A673 (cell line): ENCODE measurements at regions of chr16 and their contacts with region 1.

Region 1: DNA sequence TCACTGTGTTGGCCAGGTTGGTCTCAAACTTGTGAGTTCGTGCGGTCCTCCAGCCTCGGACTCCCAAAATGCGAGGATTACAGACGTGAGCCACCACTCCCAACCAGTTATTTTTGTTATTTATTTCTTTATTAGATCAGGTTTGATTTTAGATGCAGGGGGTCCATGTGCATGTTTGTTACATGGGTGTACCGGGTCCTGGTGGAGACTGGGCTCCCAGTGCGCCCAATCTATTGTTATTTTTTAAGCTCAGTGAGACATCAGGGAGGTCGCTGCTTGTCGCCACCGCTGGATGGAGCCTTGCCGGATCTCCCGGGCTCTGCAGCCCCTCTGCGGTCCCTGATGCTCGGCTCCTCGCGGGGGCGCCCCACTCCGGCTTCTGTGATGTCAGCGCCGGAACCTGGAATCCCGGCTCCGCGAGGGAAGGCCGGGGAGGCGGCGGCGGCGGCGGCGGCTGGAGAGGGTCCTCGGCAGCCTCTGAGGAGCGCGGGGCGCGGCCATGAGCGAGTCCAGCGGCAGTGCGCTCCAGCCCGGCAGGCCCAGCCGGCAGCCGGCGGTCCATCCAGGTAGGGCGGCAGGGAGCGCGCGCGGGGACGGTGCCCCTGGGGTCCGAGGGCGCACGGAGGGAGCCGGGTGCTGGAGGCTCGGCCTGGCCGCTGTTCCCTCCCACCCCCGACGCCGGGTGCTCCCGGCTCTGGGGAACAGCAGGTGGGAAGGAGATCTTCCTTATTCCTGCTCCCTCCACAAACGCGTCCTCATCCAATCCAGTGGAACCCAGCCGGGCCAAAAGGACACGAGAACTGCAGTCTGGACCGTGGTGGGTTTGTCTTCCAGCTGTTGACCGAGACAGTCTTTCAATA is at the start of gene TMC7:
- DNase-seq: peak; percentile 93
- H3K4me3 ChIP-seq: peak within 1 kb of the TSS; percentile 59
- H3K27ac ChIP-seq: no peak within 1 kb of the TSS
- H3K4me1 ChIP-seq: no peaks in the 10 kb centered on the region
- H3K27me3 ChIP-seq: no peaks in the 10 kb centered on the region
- CTCF ChIP-seq: peak; percentile 96
- total RNA-seq, gene TMC7: 0.59 and 0.82 TPM in 2 replicates

Region 2: GRCh38 chr16:18809165-18809564 is 174.6 kb before region 1 on chr16:
- CTCF ChIA-PET with region 1: no interaction called
- POLR2A ChIA-PET with region 1: no interaction called
- intact Hi-C with region 1: no loop called
- DNase-seq: no peak
- H3K4me3 ChIP-seq: no peak overlapping the region
- H3K27ac ChIP-seq: no peak overlapping the region
- H3K4me1 ChIP-seq: peaks cover 14% of the 10 kb centered on the region
- H3K27me3 ChIP-seq: no peaks in the 10 kb centered on the region
- CTCF ChIP-seq: no peak

Region 3: GRCh38 chr16:19071811-19072777 is 88.3 kb after region 1 on chr16:
- CTCF ChIA-PET with region 1: no interaction called
- POLR2A ChIA-PET with region 1: no interaction called
- intact Hi-C with region 1: loop called (anchors 1 kb)
- DNase-seq: peak; percentile 72
- H3K4me3 ChIP-seq: no peak overlapping the region
- H3K27ac ChIP-seq: no peak overlapping the region
- H3K4me1 ChIP-seq: peaks cover 9% of the 10 kb centered on the region
- H3K27me3 ChIP-seq: no peaks in the 10 kb centered on the region
- CTCF ChIP-seq: peak; percentile 75

Region 4: GRCh38 chr16:19375561-19376158 is 391.9 kb after region 1 on chr16:
- CTCF ChIA-PET with region 1: no interaction called
- POLR2A ChIA-PET with region 1: no interaction called
- intact Hi-C with region 1: loop called (anchors 2 kb)
- DNase-seq: peak; percentile 62
- H3K4me3 ChIP-seq: no peak overlapping the region
- H3K27ac ChIP-seq: no peak overlapping the region
- H3K4me1 ChIP-seq: no peaks in the 10 kb centered on the region
- H3K27me3 ChIP-seq: no peaks in the 10 kb centered on the region
- CTCF ChIP-seq: peak; percentile 89